Left ventricle myocardium inferior (tissue), 1 donor: ENCODE measurements at regions of chr7 and their contacts with region 1.

Region 1: GRCh38 chr7:92230547-92230946 is 15.2 kb downstream of the KRIT1 start:
- DNase-seq: no peak
- H3K4me3 ChIP-seq: no peak overlapping the region
- H3K27ac ChIP-seq: no peak overlapping the region
- H3K4me1 ChIP-seq: no peaks in the 10 kb centered on the region
- H3K27me3 ChIP-seq: no peaks in the 10 kb centered on the region
- CTCF ChIP-seq: no peak

Region 2: DNA sequence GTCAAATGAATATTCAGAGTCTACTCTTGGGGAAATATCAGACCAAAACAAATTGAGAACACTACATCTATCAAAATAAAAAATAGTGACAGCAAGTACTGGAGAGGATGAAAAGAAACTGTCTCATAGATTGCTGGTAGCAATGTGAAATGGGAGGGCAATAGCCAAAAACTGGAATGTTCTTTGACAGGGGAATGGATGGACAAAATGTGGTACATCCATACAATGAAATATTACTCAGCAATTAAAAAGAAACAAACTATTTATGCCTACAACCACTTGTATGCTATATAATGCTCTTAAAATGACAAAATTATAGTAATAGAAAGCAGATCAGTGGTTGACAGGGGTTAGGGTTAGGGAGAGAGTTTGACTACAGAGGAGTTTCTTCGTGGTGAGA is 142.3 kb before region 1 on chr7:
- intact Hi-C with region 1: loop called (anchors 10 kb)
- DNase-seq: no peak
- H3K4me3 ChIP-seq: no peak overlapping the region
- H3K27ac ChIP-seq: no peak overlapping the region
- H3K4me1 ChIP-seq: no peaks in the 10 kb centered on the region
- H3K27me3 ChIP-seq: no peaks in the 10 kb centered on the region
- CTCF ChIP-seq: no peak

Region 3: DNA sequence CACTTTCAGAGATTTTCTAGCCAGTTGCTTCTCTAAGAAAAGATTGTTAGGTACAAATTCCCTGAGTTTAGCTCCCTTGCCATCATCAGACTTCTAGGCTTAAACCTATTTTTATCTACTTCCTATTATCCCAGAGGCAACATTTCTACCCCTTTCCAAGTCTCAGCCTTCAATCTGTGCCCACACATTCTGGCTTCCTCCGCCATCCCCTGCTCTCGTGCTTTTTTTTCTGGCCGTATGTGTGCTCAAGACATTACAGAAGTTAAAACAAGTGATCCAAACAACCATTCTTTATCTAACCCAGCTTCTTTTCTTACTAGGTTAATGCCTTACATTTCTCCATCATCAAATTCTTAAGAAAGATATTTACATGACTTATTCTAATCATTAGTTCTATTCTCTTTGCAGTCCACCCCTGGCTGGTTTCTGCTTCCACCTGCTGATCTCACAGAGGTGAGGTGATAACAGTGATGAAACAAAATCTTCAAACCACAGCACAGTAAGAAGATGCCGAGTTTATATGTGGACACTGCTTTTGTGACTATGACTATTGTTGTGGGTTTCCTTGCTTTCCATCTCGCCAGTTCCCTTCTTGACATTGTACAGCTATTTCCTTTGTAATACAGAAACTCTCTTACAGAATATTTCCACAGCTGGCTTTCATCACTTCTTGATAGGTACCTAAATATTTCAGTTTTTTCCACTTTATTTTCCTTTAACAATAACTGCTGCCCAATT is 624.1 kb after region 1 on chr7:
- intact Hi-C with region 1: no loop called
- DNase-seq: no peak
- H3K4me3 ChIP-seq: no peak overlapping the region
- H3K27ac ChIP-seq: no peak overlapping the region
- H3K4me1 ChIP-seq: no peaks in the 10 kb centered on the region
- H3K27me3 ChIP-seq: no peaks in the 10 kb centered on the region
- CTCF ChIP-seq: no peak